Vagina (tissue), 2 donors: ENCODE measurements at regions of chr7 and their contacts with region 1.

Region 1: GRCh38 chr7:92621026-92621540 is 30.9 kb upstream of the FAM133B start:
- DNase-seq: no peak
- H3K4me3 ChIP-seq: no peak overlapping the region
- H3K27ac ChIP-seq: peak overlapping the region; percentile 35
- H3K4me1 ChIP-seq: peaks cover 11% of the 10 kb centered on the region
- H3K27me3 ChIP-seq: no peaks in the 10 kb centered on the region
- CTCF ChIP-seq: peak; percentile 78 to 85 (median 82)
- POLR2A ChIP-seq: no peak

Region 2: GRCh38 chr7:93055543-93056107 is 434.5 kb after region 1 on chr7:
- intact Hi-C with region 1: loop called (anchors 5 kb)
- DNase-seq: no peak
- H3K4me3 ChIP-seq: no peak overlapping the region
- H3K27ac ChIP-seq: no peak overlapping the region
- H3K4me1 ChIP-seq: no peaks in the 10 kb centered on the region
- H3K27me3 ChIP-seq: no peaks in the 10 kb centered on the region
- CTCF ChIP-seq: peak; percentile 38 to 86 (median 54)
- POLR2A ChIP-seq: no peak